Psoas muscle (tissue), 8 donors: ENCODE measurements at regions of chr9 and their contacts with region 1.

Region 1: DNA sequence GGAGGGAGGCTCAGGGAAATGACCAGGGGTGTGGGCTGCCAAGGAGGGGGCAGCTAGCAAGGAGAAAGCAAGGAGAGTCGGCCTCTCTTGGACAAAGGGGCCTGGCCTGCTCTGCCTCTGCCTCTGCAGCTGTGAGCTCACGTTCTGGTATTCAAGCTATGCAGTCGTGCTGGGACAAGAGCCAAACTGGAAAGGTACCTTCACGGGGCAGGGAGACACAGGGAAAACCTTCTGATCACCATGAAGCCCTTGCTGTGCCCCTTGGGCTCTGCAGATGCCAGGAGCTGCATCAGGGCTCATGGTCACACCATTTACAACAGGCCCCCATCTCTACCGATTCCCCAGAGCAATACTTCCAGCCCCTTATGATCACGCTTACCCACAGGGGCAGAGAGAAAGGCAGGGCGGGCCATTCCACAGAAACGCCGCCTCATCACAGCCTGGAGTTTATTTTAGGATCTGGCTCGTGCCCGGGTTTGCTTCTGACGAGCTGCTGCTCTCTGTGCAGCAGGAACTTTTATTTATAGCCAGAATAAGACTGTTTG is 63.2 kb downstream of the PRRT1B start:
- DNase-seq: peak; percentile 66 to 84
- ATAC-seq: peak; percentile 83 to 91 (median 89)
- H3K4me3 ChIP-seq: peak overlapping the region; percentile 41
- H3K27ac ChIP-seq: peak overlapping the region; percentile 94
- H3K4me1 ChIP-seq: peaks cover 47% of the 10 kb centered on the region
- H3K27me3 ChIP-seq: no peaks in the 10 kb centered on the region
- CTCF ChIP-seq: no peak

Region 2: GRCh38 chr9:131650254-131650653 is 41.7 kb after region 1 on chr9:
- intact Hi-C with region 1: loop called in 1 of 2 experiments (anchors 5 kb)
- DNase-seq: peak; percentile 93 to 96
- ATAC-seq: peak; percentile 90 to 96 (median 92)
- H3K4me3 ChIP-seq: no peak overlapping the region
- H3K27ac ChIP-seq: peak overlapping the region; percentile 84
- H3K4me1 ChIP-seq: peaks cover 71% of the 10 kb centered on the region
- H3K27me3 ChIP-seq: no peaks in the 10 kb centered on the region
- CTCF ChIP-seq: no peak